HepG2 (cell line): ENCODE measurements at regions of chrX and their contacts with region 1.

Region 1: DNA sequence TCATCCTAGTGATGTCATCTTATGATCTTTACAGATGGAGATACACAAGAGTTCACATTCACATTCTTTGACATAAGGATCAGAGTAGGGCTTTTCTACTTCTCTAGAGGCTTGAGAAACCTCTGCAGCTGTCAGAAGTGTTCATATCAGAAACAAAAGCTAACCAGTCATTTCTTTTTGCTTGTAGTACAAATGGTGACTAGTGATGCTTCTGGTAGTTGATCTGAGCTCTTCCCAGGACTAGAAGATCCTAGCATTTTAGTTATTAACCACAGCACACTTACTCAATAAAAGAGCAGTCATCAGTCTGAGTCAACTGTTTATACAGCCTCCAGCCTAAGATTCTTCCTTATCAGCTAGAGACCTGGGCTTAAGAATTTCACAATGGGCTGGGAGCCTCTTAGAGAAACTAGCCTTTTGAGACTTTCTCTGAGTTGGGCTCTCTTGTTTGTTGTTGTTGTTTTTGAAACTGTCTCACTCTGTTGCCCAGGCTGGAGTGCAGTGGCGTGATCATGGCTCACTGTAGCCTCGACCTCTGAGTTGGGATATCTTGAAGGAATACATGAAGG is 84.1 kb downstream of the TMEM164 start:
- DNase-seq: peak; percentile 12
- ATAC-seq: no peak
- H3K4me3 ChIP-seq: no peak overlapping the region
- H3K27ac ChIP-seq: no peak overlapping the region
- H3K4me1 ChIP-seq: peaks cover 26% of the 10 kb centered on the region
- H3K27me3 ChIP-seq: no peaks in the 10 kb centered on the region
- CTCF ChIP-seq: no peak
- EP300 ChIP-seq: no peak
- POLR2A ChIP-seq: no peak
- RAD21 ChIP-seq: no peak

Region 2: DNA sequence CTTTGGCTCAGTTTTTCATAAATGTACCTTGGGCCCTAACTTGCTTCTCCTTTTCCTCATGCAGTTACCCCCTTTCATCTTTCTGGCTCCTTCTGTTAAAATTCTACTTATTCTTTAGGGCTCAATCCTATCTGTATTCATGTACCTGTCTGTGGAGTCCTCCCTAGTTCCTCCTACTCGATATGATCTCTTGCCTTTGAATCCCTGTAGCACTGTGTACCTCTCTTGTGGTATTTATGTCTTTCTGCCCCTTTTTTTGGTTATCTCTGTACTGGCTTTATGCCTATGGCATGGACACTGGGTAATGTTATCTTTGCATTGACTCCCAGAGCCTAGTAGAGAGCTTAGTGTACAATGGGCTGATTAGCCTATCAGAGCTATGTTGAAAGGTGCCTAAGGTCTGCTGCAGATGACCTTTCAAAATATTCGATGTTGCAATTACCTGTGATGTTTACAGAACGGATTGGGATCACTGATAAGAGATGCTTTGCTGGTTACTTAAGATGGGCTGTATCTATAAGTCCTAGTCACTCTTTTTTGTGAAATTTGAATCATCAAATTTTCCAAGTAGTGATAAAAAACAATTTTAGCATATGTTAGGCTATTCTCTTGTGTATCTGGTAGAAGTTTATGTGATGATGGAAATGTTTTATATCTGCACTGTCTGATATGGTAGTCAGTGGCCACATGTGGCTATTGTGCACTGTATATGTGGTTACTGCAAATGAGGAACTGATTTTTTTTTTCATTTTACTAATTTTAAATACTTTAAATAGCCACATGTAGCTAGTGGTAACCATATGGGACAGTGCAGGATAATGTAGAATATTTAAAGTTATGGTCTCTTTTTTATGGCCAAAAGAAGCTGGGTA is 50.6 kb before region 1 on chrX:
- CTCF ChIA-PET with region 1: no interaction called
- POLR2A ChIA-PET with region 1: no interaction called
- in situ Hi-C with region 1: no loop called
- intact Hi-C with region 1: loop called (anchors 5 kb)
- DNase-seq: peak; percentile 71
- ATAC-seq: peak; percentile 92
- H3K4me3 ChIP-seq: no peak overlapping the region
- H3K27ac ChIP-seq: no peak overlapping the region
- H3K4me1 ChIP-seq: peaks cover 33% of the 10 kb centered on the region
- H3K27me3 ChIP-seq: no peaks in the 10 kb centered on the region
- CTCF ChIP-seq: no peak
- EP300 ChIP-seq: peak in 1 of 2 experiments; percentile 69; a peak in 2 of 4 replicates
- POLR2A ChIP-seq: no peak
- RAD21 ChIP-seq: no peak